Testis (tissue), 5 donors: ENCODE measurements at regions of chr19 and their contacts with region 1.

Region 1: GRCh38 chr19:6424939-6425731 is 524 bp upstream of the KHSRP start:
- DNase-seq: peak; percentile 100
- H3K4me3 ChIP-seq: peak overlapping the region in 1 of 2 donors; percentile 44
- H3K27ac ChIP-seq: peak overlapping the region; percentile 53 to 87
- H3K4me1 ChIP-seq: peaks cover 16% of the 10 kb centered on the region
- H3K27me3 ChIP-seq: no peaks in the 10 kb centered on the region
- CTCF ChIP-seq: peak in 1 of 3 experiments; percentile 1
- POLR2A ChIP-seq: no peak

Region 2: GRCh38 chr19:6378041-6378440 is 47.1 kb before region 1 on chr19:
- intact Hi-C with region 1: no loop called
- DNase-seq: peak; percentile 32
- H3K4me3 ChIP-seq: no peak overlapping the region
- H3K27ac ChIP-seq: no peak overlapping the region
- H3K4me1 ChIP-seq: peaks cover 8% of the 10 kb centered on the region
- H3K27me3 ChIP-seq: no peaks in the 10 kb centered on the region
- CTCF ChIP-seq: no peak
- POLR2A ChIP-seq: no peak

Region 3: GRCh38 chr19:6393074-6393983 is 31.8 kb before region 1 on chr19 and contains the start of gene GTF2F1:
- intact Hi-C with region 1: loop called (anchors 5 kb)
- DNase-seq: peak; percentile 97
- H3K4me3 ChIP-seq: peak within 1 kb of the TSS; percentile 75 to 97
- H3K27ac ChIP-seq: peak within 1 kb of the TSS; percentile 95
- H3K4me1 ChIP-seq: peaks cover 7% of the 10 kb centered on the region
- H3K27me3 ChIP-seq: no peaks in the 10 kb centered on the region
- CTCF ChIP-seq: peak in 1 of 3 experiments; percentile 1
- POLR2A ChIP-seq: no peak
- total RNA-seq, gene GTF2F1: 78.1 to 81.1 TPM

Region 4: GRCh38 chr19:6516659-6517291 is 91.6 kb after region 1 on chr19:
- intact Hi-C with region 1: no loop called
- DNase-seq: peak; percentile 91
- H3K4me3 ChIP-seq: peak overlapping the region; percentile 53 to 60
- H3K27ac ChIP-seq: peak overlapping the region in 1 of 2 donors; percentile 73
- H3K4me1 ChIP-seq: no peaks in the 10 kb centered on the region
- H3K27me3 ChIP-seq: no peaks in the 10 kb centered on the region
- CTCF ChIP-seq: peak; percentile 78 to 89 (median 88)
- POLR2A ChIP-seq: no peak